ENCODE measurements at regions of chr2 and their contacts with region 1.

Region 1: GRCh38 chr2:30711646-30712085 is 95.6 kb downstream of the CAPN13 start:
- DNase-seq: peak; percentile 59
- ATAC-seq: peak; percentile 72
- H3K4me3 ChIP-seq: no peak overlapping the region
- H3K27ac ChIP-seq: no peak overlapping the region
- H3K4me1 ChIP-seq: peaks cover 13% of the 10 kb centered on the region
- H3K27me3 ChIP-seq: no peaks in the 10 kb centered on the region
- CTCF ChIP-seq: peak; percentile 100; a peak in 5 of 6 replicates
- EP300 ChIP-seq: no peak
- POLR2A ChIP-seq: no peak
- RAD21 ChIP-seq: peak; percentile 96

Region 2: DNA sequence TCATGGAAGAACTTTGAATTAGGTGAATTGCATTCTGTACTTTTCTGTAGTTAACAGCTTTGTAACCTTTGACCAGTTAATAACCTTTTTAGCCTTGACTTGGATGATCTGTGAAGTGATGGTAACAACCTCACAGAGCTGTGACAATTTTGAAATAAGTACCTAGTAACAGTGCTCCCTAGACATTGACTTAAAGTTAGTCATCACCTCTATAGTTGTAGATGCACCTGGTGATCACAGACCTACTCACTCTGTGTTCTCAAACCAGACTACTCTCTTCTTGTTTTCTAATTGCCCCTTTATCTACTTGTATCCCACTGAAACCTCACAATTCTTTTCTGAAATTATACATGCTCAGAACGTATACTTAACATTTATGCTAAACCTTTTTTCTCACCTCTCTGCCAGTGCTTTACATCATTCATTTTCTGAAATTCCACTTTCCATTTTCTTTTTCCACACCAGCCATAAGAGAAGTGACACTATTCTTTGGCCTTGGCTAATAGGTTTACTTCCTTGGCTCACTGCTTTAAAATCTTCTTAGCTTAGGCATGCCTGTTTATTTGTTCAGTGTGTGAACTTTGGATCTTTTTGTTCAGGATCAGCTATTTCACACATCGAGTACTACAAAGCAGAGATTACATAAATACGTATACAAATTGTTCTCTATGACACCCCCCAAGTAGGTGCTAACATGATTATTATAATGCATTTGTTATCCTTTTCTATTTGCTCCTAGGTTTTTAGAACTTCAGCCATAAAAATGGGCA is 555.6 kb before region 1 on chr2:
- CTCF ChIA-PET with region 1: interaction called, 86 read pairs
- POLR2A ChIA-PET with region 1: no interaction called
- RAD21 ChIA-PET with region 1: interaction called, 31 read pairs
- SMC1A ChIA-PET with region 1: interaction called, 32 read pairs
- in situ Hi-C with region 1: no loop called
- intact Hi-C with region 1: no loop called
- DNase-seq: no peak
- ATAC-seq: peak; percentile 66
- H3K4me3 ChIP-seq: no peak overlapping the region
- H3K27ac ChIP-seq: no peak overlapping the region
- H3K4me1 ChIP-seq: peaks cover 3% of the 10 kb centered on the region; the same call in 1 of the 2 replicates
- H3K27me3 ChIP-seq: no peaks in the 10 kb centered on the region
- CTCF ChIP-seq: no peak
- EP300 ChIP-seq: no peak
- POLR2A ChIP-seq: no peak
- RAD21 ChIP-seq: no peak

Region 3: GRCh38 chr2:30217644-30218337 is 493.9 kb before region 1 on chr2:
- CTCF ChIA-PET with region 1: interaction called, 334 read pairs
- POLR2A ChIA-PET with region 1: no interaction called
- RAD21 ChIA-PET with region 1: interaction called, 6 read pairs
- SMC1A ChIA-PET with region 1: interaction called, 8 read pairs
- in situ Hi-C with region 1: no loop called
- intact Hi-C with region 1: no loop called
- DNase-seq: peak; percentile 48
- ATAC-seq: peak; percentile 87
- H3K4me3 ChIP-seq: no peak overlapping the region
- H3K27ac ChIP-seq: no peak overlapping the region
- H3K4me1 ChIP-seq: peaks cover 10% of the 10 kb centered on the region
- H3K27me3 ChIP-seq: no peaks in the 10 kb centered on the region
- CTCF ChIP-seq: no peak
- EP300 ChIP-seq: no peak
- POLR2A ChIP-seq: no peak
- RAD21 ChIP-seq: no peak

Region 4: DNA sequence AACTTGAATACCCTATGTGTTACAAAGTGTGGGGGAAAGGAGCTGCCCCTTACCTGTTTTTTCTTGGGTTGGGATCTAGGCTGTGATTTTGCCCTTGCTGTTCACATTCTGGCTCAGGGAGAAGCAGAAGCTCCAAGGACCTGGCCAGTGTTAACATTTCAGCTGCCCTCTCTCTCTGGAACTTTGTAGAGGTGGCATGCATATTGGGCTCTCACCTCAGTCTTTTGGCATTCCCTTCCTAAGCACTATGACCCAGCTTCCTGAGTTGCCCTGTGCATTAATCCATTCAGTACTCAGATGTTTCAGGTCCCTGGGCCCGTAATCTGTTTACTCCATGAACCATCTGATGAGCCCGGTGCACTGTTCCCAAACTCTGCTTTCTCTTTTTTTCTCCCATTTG is 252.5 kb before region 1 on chr2:
- CTCF ChIA-PET with region 1: interaction called, 14 read pairs
- POLR2A ChIA-PET with region 1: no interaction called
- RAD21 ChIA-PET with region 1: no interaction called
- SMC1A ChIA-PET with region 1: no interaction called
- in situ Hi-C with region 1: no loop called
- intact Hi-C with region 1: no loop called
- DNase-seq: no peak
- ATAC-seq: no peak
- H3K4me3 ChIP-seq: no peak overlapping the region
- H3K27ac ChIP-seq: no peak overlapping the region
- H3K4me1 ChIP-seq: peaks cover 3% of the 10 kb centered on the region; the same call in 1 of the 2 replicates
- H3K27me3 ChIP-seq: no peaks in the 10 kb centered on the region
- CTCF ChIP-seq: no peak
- EP300 ChIP-seq: no peak
- POLR2A ChIP-seq: no peak
- RAD21 ChIP-seq: no peak

Region 5: DNA sequence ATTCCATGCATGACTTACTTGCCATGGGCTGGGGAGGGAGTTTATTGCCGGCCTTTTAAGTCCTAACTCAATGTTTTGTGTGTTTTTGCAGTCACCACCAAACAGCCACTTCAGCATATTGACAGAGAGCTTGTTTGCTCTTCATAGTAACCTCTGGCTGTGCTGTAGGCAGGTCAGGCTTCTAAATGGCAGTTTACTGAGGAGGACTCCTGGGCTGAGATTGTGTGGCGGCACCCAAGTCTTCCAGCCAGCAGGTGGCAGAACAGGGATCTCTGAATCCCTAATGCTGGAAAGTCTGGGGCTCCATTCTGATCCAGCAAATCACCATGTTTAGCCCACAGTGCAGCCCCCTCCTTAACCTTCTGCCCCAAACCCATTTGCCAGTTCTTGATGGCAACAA is 25.7 kb before region 1 on chr2:
- CTCF ChIA-PET with region 1: interaction called, 39 read pairs
- POLR2A ChIA-PET with region 1: no interaction called
- RAD21 ChIA-PET with region 1: interaction called, 8 read pairs
- SMC1A ChIA-PET with region 1: interaction called, 7 read pairs
- in situ Hi-C with region 1: no loop called
- intact Hi-C with region 1: no loop called
- DNase-seq: no peak
- ATAC-seq: peak; percentile 61
- H3K4me3 ChIP-seq: no peak overlapping the region
- H3K27ac ChIP-seq: no peak overlapping the region
- H3K4me1 ChIP-seq: no peaks in the 10 kb centered on the region
- H3K27me3 ChIP-seq: no peaks in the 10 kb centered on the region
- CTCF ChIP-seq: peak; percentile 30 to 35 (median 33); a peak in 5 of 6 replicates
- EP300 ChIP-seq: no peak
- POLR2A ChIP-seq: no peak
- RAD21 ChIP-seq: no peak

Region 6: GRCh38 chr2:30927465-30928075 is 215.9 kb after region 1 on chr2:
- CTCF ChIA-PET with region 1: no interaction called
- POLR2A ChIA-PET with region 1: no interaction called
- RAD21 ChIA-PET with region 1: no interaction called
- SMC1A ChIA-PET with region 1: no interaction called
- in situ Hi-C with region 1: no loop called
- intact Hi-C with region 1: no loop called
- DNase-seq: no peak
- ATAC-seq: no peak
- H3K4me3 ChIP-seq: no peak overlapping the region
- H3K27ac ChIP-seq: no peak overlapping the region
- H3K4me1 ChIP-seq: no peaks in the 10 kb centered on the region
- H3K27me3 ChIP-seq: no peaks in the 10 kb centered on the region; a peak in 2 of 4 replicates
- CTCF ChIP-seq: no peak
- EP300 ChIP-seq: no peak
- POLR2A ChIP-seq: no peak
- RAD21 ChIP-seq: no peak

Region 7: GRCh38 chr2:31020713-31021112 is 309.0 kb after region 1 on chr2:
- CTCF ChIA-PET with region 1: no interaction called
- POLR2A ChIA-PET with region 1: no interaction called
- RAD21 ChIA-PET with region 1: no interaction called
- SMC1A ChIA-PET with region 1: no interaction called
- in situ Hi-C with region 1: no loop called
- intact Hi-C with region 1: no loop called
- DNase-seq: no peak
- ATAC-seq: no peak
- H3K4me3 ChIP-seq: no peak overlapping the region
- H3K27ac ChIP-seq: no peak overlapping the region
- H3K4me1 ChIP-seq: no peaks in the 10 kb centered on the region
- H3K27me3 ChIP-seq: no peaks in the 10 kb centered on the region
- CTCF ChIP-seq: no peak
- EP300 ChIP-seq: no peak
- POLR2A ChIP-seq: no peak
- RAD21 ChIP-seq: no peak

Region 8: GRCh38 chr2:31333527-31334183 is 622.0 kb after region 1 on chr2:
- CTCF ChIA-PET with region 1: interaction called, 138 read pairs
- POLR2A ChIA-PET with region 1: no interaction called
- RAD21 ChIA-PET with region 1: interaction called, 103 read pairs
- SMC1A ChIA-PET with region 1: interaction called, 47 read pairs
- in situ Hi-C with region 1: loop called (anchors 5 kb)
- intact Hi-C with region 1: loop called (anchors 1 kb)
- DNase-seq: peak; percentile 24
- ATAC-seq: peak; percentile 98
- H3K4me3 ChIP-seq: no peak overlapping the region
- H3K27ac ChIP-seq: no peak overlapping the region
- H3K4me1 ChIP-seq: no peaks in the 10 kb centered on the region
- H3K27me3 ChIP-seq: peaks cover 0 to 3% of the 10 kb centered on the region in 2 experiments; a peak in 1 of 4 replicates
- CTCF ChIP-seq: peak; percentile 96 to 98 (median 97)
- EP300 ChIP-seq: no peak
- POLR2A ChIP-seq: no peak
- RAD21 ChIP-seq: peak; percentile 99